Heart left ventricle (tissue), 16 donors: ENCODE measurements at regions of chr9 and their contacts with region 1.

Region 1: GRCh38 chr9:97468658-97469448 is 32.6 kb upstream of the TMOD1 start:
- DNase-seq: peak; percentile 73 to 80 (median 77)
- ATAC-seq: peak; percentile 95 to 98 (median 97)
- H3K4me3 ChIP-seq: no peak overlapping the region
- H3K27ac ChIP-seq: peak overlapping the region in 11 of 12 donors; percentile 11 to 78 (median 69)
- H3K4me1 ChIP-seq: peaks cover 0 to 20% (median 11%) of the 10 kb centered on the region in 12 donors
- H3K27me3 ChIP-seq: no peaks in the 10 kb centered on the region
- CTCF ChIP-seq: peak; percentile 62 to 94 (median 81)
- POLR2A ChIP-seq: no peak

Region 2: DNA sequence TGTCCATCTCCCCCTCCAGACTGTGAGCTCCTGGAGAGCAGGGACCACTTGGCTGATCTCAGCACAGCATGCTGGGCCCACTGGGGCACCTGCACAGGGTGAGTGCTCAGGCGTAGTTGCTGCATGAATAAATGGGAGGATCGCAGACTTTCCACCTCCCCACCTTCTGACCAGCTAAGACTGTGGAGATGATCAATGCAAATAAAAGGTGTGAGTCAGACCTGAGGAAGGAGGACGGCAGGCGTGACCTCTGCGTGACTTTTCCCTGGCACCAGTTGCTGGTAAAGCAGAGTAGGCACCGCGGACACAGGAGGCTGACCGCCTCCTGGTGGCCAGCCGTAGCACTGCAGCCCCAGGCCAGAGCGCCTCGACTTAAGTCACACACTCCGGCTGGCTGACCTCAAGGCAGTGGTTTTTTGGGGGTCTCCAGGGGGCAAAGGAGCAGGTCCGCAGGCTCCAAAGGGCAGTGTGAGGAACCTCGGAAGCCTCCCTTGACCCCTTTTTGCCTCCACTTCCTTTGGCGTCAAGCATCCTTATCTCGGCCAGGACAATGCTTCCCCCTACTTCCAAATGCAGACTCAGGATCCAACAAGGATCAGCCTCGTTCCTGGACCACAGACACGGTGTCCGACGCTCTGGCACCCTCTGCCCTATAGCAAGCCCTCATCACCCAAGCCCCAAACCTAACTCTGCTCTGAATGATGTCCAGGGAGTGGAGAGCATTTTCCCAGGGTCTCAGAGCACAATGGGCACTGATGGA is 69.7 kb before region 1 on chr9:
- intact Hi-C with region 1: no loop called
- DNase-seq: peak; percentile 21 to 83 (median 72)
- ATAC-seq: peak; percentile 55 to 88 (median 86)
- H3K4me3 ChIP-seq: no peak overlapping the region
- H3K27ac ChIP-seq: no peak overlapping the region
- H3K4me1 ChIP-seq: peaks cover 0 to 6% (median 0%) of the 10 kb centered on the region in 12 donors
- H3K27me3 ChIP-seq: peaks cover 0 to 4% (median 0%) of the 10 kb centered on the region in 9 donors
- CTCF ChIP-seq: peak; percentile 80 to 97 (median 91)
- POLR2A ChIP-seq: no peak

Region 3: DNA sequence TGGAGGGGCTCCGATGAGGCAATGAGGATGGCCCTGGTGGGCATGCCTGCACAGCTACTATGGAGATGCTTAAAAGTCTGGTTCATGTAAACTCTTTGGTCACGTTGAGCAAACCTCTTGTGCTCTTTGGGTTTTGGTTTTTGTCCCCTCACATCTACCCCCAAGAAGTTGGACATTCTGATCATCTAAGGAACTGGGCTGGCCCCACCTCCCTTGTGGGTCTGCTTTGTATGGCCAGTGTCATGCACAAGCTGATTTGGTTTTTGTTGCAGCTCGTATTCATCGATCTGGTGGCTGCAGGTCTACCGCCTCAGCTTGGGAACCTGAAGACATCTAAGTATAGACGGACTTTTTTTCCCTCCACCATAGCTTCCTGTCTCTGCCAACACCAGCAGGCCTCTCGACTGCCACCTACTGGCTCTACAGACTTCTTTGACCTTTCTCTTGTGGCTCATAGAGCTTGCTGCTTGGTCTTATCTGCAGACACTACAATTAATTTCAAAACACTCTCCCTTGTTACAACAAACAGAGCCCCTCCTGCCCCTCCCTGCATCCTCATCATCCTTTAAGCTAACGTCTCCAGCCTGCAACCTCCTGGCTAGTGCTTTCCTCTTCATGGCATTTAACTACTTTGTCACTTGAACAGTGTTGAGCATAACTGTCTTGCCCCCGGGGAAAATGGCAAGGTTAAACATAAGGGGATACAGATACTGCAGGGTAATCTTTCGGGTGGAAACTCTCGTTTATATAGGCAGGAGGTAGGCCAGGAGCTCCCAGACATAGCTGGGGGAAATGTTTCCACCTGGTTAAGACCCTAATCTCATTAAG is 129.8 kb after region 1 on chr9:
- intact Hi-C with region 1: loop called (anchors 1 to 5 kb)
- DNase-seq: peak in 4 of 5 donors; percentile 77 to 86 (median 79)
- ATAC-seq: peak; percentile 45 to 74 (median 66)
- H3K4me3 ChIP-seq: no peak overlapping the region
- H3K27ac ChIP-seq: peak overlapping the region in 6 of 12 donors; percentile 16 to 53 (median 25)
- H3K4me1 ChIP-seq: peaks cover 0 to 79% (median 29%) of the 10 kb centered on the region in 12 donors
- H3K27me3 ChIP-seq: no peaks in the 10 kb centered on the region
- CTCF ChIP-seq: peak; percentile 81 to 89 (median 86)
- POLR2A ChIP-seq: no peak

Region 4: DNA sequence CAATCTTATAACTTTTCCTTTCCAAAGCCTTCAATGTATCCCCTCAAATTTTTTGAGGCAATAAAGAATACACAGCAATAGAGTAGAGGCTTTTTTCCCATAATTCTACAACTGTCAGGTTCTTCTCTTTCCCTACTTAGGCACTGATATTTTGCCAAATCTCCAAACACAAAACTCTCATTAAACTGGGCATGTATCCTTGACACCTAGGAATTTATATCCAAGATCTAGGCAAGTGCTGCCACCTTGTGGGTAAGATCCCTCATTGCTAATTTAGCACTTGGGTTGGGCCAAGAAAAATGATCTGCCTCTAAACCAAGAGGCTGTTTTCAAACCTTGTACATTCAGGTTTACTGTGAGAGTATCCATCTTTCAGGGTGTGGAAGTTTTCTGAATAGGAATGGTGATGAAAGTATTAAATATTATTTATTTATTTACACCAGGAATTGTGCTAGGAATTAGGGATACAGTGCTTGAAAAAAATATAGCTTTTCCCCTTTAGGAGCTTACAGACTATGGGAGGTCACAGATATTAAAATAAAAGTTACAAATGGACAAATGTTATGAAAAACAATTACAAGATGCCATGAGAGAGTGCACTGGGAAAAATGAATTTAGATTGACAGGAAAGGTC is 146.7 kb after region 1 on chr9:
- intact Hi-C with region 1: loop called (anchors 1 to 5 kb)
- DNase-seq: peak in 2 of 5 donors; percentile 46 to 58
- ATAC-seq: peak in 3 of 4 donors; percentile 63 to 75 (median 71)
- H3K4me3 ChIP-seq: no peak overlapping the region
- H3K27ac ChIP-seq: peak overlapping the region in 1 of 12 donors; percentile 41
- H3K4me1 ChIP-seq: peaks cover 0 to 10% (median 2%) of the 10 kb centered on the region in 12 donors
- H3K27me3 ChIP-seq: no peaks in the 10 kb centered on the region
- CTCF ChIP-seq: peak; percentile 71 to 90 (median 84)
- POLR2A ChIP-seq: no peak

Region 5: GRCh38 chr9:97632985-97633858 is 164.4 kb after region 1 on chr9 and contains the starts of genes NCBP1 and TSTD2:
- intact Hi-C with region 1: no loop called
- DNase-seq: peak; percentile 97 to 99 (median 98)
- ATAC-seq: peak; percentile 93 to 96 (median 94)
- H3K4me3 ChIP-seq: peak within 1 kb of the TSS; percentile 50 to 98 (median 76)
- H3K27ac ChIP-seq: peak within 1 kb of the TSS; percentile 86 to 98 (median 96)
- H3K4me1 ChIP-seq: peaks cover 6 to 66% (median 48%) of the 10 kb centered on the region in 12 donors
- H3K27me3 ChIP-seq: no peaks in the 10 kb centered on the region
- CTCF ChIP-seq: peak in 4 of 12 donors; percentile 7 to 29 (median 22)
- POLR2A ChIP-seq: peak in 1 of 2 donors; percentile 60
- total RNA-seq, gene NCBP1: 13.9 to 22.4 (median 19.7) TPM
- total RNA-seq, gene TSTD2: 16.5 to 32.9 (median 22.4) TPM

Region 6: GRCh38 chr9:97703437-97704344 is 234.8 kb after region 1 on chr9:
- intact Hi-C with region 1: loop called in 1 of 10 experiments (anchors 10 kb)
- DNase-seq: no peak
- ATAC-seq: peak in 2 of 4 donors; percentile 39 to 60
- H3K4me3 ChIP-seq: no peak overlapping the region
- H3K27ac ChIP-seq: no peak overlapping the region
- H3K4me1 ChIP-seq: peaks cover 0 to 7% (median 0%) of the 10 kb centered on the region in 12 donors
- H3K27me3 ChIP-seq: peaks cover 0 to 21% (median 0%) of the 10 kb centered on the region in 9 donors
- CTCF ChIP-seq: no peak
- POLR2A ChIP-seq: no peak

Region 7: GRCh38 chr9:97900738-97901565 is 432.1 kb after region 1 on chr9:
- intact Hi-C with region 1: loop called in 3 of 10 experiments (anchors 5 to 10 kb)
- DNase-seq: no peak
- ATAC-seq: peak in 1 of 4 donors; percentile 50
- H3K4me3 ChIP-seq: no peak overlapping the region
- H3K27ac ChIP-seq: no peak overlapping the region
- H3K4me1 ChIP-seq: peaks cover 0 to 14% (median under 1%) of the 10 kb centered on the region in 12 donors
- H3K27me3 ChIP-seq: no peaks in the 10 kb centered on the region
- CTCF ChIP-seq: peak; percentile 53 to 77 (median 70)
- POLR2A ChIP-seq: no peak

Region 8: GRCh38 chr9:97906236-97906831 is 437.5 kb after region 1 on chr9:
- intact Hi-C with region 1: loop called in 3 of 10 experiments (anchors 5 to 10 kb)
- DNase-seq: peak in 4 of 5 donors; percentile 26 to 60 (median 46)
- ATAC-seq: peak in 3 of 4 donors; percentile 78 to 83 (median 80)
- H3K4me3 ChIP-seq: peak overlapping the region in 1 of 12 donors; percentile 16
- H3K27ac ChIP-seq: peak overlapping the region in 5 of 12 donors; percentile 2 to 90 (median 5)
- H3K4me1 ChIP-seq: peaks cover 0 to 40% (median 6%) of the 10 kb centered on the region in 12 donors
- H3K27me3 ChIP-seq: no peaks in the 10 kb centered on the region
- CTCF ChIP-seq: no peak
- POLR2A ChIP-seq: no peak